Endothelial cell of umbilical vein (primary cell): ENCODE measurements at regions of chr1 and their contacts with region 1.

Region 1: GRCh38 chr1:113963281-113963906 is 15.9 kb upstream of the OLFML3 start:
- DNase-seq: no peak
- H3K4me3 ChIP-seq: no peak overlapping the region
- H3K27ac ChIP-seq: no peak overlapping the region
- H3K4me1 ChIP-seq: no peaks in the 10 kb centered on the region
- H3K27me3 ChIP-seq: no peaks in the 10 kb centered on the region
- CTCF ChIP-seq: no peak
- POLR2A ChIP-seq: no peak

Region 2: DNA sequence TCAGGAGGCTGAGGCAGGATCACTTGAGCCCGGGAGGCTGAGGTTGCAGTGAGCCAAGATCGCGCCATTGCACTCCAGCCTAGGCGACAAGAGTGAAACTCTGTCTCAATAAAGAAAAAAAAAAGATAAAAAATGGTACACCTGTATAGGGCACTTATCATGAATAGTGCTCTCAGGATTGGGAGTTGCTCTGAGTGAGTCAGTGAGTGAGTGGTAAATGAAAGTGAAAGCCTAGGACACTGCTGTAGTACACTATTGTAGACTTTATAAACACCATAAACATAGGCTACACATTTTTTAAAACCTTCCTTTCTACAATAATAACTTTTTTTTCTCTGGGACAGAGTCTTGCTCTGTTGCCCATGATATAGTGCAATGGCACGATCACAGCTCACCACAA is 220.9 kb before region 1 on chr1:
- CTCF ChIA-PET with region 1: no interaction called
- POLR2A ChIA-PET with region 1: no interaction called
- dilution Hi-C with region 1: loop called (anchors 10 kb)
- intact Hi-C with region 1: no loop called
- DNase-seq: no peak
- H3K4me3 ChIP-seq: no peak overlapping the region
- H3K27ac ChIP-seq: no peak overlapping the region
- H3K4me1 ChIP-seq: no peaks in the 10 kb centered on the region
- H3K27me3 ChIP-seq: no peaks in the 10 kb centered on the region
- CTCF ChIP-seq: no peak
- POLR2A ChIP-seq: no peak

Region 3: GRCh38 chr1:113949007-113949406 is 14.4 kb before region 1 on chr1:
- CTCF ChIA-PET with region 1: interaction called, 23 read pairs
- POLR2A ChIA-PET with region 1: interaction called, 6 read pairs
- dilution Hi-C with region 1: no loop called
- intact Hi-C with region 1: no loop called
- DNase-seq: peak; percentile 28
- H3K4me3 ChIP-seq: no peak overlapping the region
- H3K27ac ChIP-seq: no peak overlapping the region
- H3K4me1 ChIP-seq: peaks cover 25% of the 10 kb centered on the region
- H3K27me3 ChIP-seq: no peaks in the 10 kb centered on the region
- CTCF ChIP-seq: peak; percentile 10 to 26
- POLR2A ChIP-seq: no peak

Region 4: DNA sequence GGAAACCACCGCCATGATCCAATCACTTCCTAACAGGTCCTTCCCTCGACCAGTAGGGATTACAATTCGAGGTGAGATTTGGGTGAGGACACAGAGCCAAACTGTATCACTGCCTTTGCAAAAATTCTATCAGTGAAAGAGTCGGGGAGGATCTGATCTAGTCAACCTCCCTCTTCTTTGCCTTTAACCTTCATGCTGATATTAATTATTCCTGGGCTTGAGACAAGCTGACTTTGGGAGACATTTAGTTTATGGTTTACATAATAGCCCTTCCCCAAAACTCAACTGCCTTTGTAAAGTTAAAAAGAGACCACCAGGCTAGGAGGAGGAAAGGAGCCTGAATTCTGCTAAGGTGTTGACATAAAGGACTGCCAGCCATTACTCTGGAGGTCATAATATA is 454.9 kb after region 1 on chr1:
- CTCF ChIA-PET with region 1: no interaction called
- POLR2A ChIA-PET with region 1: no interaction called
- dilution Hi-C with region 1: no loop called
- intact Hi-C with region 1: no loop called
- DNase-seq: no peak
- H3K4me3 ChIP-seq: no peak overlapping the region
- H3K27ac ChIP-seq: no peak overlapping the region
- H3K4me1 ChIP-seq: no peaks in the 10 kb centered on the region
- H3K27me3 ChIP-seq: no peaks in the 10 kb centered on the region
- CTCF ChIP-seq: no peak
- POLR2A ChIP-seq: no peak